Breast epithelium (tissue), 4 donors: ENCODE measurements at regions of chr13 and their contacts with region 1.

Region 1: GRCh38 chr13:23684647-23685046 is 114.4 kb downstream of the TNFRSF19 start:
- DNase-seq: no peak
- H3K4me3 ChIP-seq: no peak overlapping the region
- H3K27ac ChIP-seq: no peak overlapping the region
- H3K4me1 ChIP-seq: no peaks in the 10 kb centered on the region
- H3K27me3 ChIP-seq: no peaks in the 10 kb centered on the region
- CTCF ChIP-seq: no peak
- POLR2A ChIP-seq: no peak

Region 2: GRCh38 chr13:22271903-22272302 is 1412.7 kb before region 1 on chr13:
- intact Hi-C with region 1: no loop called
- DNase-seq: no peak
- H3K4me3 ChIP-seq: no peak overlapping the region
- H3K27ac ChIP-seq: no peak overlapping the region
- H3K4me1 ChIP-seq: no peaks in the 10 kb centered on the region
- H3K27me3 ChIP-seq: no peaks in the 10 kb centered on the region
- CTCF ChIP-seq: no peak
- POLR2A ChIP-seq: no peak

Region 3: DNA sequence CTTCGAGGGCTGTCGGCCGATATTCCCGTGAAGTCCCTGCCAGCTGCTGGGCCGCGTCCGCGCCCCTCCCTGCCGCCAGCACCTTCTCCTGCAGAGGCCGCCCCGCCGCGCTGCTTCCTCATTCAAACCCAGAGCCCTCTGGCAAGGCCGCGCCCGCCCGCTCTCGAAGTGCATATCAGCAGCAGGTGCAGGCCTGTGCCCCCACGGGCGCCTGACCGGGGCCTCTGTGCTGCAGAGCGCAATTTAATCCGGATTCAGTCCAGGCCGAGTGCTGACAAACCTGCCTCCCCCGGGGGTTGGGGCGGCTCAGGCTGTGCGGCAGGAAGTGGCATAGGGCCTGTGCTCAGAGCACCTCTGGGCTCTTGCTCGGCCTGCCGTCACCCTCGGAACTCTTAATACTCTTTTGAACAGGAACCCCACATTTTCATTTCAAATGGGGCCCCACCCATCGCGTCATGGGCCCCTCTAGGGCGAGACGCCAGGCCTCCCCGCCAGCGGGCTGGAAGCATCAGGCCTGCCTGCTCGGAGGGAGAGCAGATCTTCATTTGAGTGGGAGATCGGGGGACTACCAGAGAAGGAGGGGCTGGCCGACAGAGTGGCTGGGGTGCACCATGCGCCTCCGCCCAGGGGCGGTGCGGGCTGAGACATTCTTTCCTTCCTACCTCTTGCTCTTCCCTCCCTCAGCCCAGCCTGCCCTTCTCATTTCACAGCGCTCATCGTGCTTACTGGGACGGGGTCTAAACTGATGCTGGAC is 11.2 kb after region 1 on chr13:
- intact Hi-C with region 1: loop called (anchors 1 kb)
- DNase-seq: no peak
- H3K4me3 ChIP-seq: peak overlapping the region in 2 of 3 donors; percentile 3 to 52
- H3K27ac ChIP-seq: no peak overlapping the region
- H3K4me1 ChIP-seq: no peaks in the 10 kb centered on the region
- H3K27me3 ChIP-seq: no peaks in the 10 kb centered on the region
- CTCF ChIP-seq: no peak
- POLR2A ChIP-seq: no peak

Region 4: DNA sequence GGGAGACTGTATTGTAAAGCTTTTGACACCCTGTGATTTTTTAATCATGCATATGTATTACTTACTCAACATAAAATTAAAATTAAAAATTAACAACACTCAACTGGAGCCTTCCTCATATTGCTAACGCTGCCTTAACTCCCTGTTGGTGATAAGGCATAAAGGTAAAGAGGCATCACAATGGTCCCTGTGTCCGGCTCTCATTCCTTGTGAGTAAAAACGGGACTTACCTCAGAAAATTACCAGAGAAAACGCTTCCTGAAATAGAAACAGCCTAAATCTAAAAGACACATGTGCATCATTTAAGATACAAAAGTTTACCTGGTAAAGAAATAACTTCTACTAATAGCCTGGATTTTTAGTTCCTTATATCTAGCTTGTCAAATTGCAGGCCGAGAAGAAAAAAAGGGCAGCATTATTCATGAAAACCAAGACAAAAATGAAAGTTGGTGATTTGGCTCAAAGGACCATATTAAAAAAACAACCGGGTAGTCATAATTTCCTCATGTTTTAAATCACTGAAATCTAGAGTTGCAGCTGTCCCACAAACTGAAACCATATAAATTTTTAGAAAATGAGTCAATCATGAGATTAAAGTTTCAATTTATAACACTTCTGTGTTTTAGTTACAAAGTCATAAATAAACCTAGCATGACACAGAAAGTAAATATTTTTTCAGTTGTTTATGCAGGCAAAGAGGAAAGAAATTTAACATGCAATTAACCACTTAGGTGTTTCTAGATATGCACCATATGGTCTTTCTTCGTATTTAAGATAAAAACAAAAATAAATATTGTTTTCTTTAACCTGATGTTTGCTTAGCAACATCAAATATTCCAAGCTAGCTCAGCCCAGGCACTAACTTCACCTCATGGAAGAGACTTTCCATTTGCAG is 109.9 kb after region 1 on chr13:
- intact Hi-C with region 1: no loop called
- DNase-seq: no peak
- H3K4me3 ChIP-seq: no peak overlapping the region
- H3K27ac ChIP-seq: no peak overlapping the region
- H3K4me1 ChIP-seq: no peaks in the 10 kb centered on the region
- H3K27me3 ChIP-seq: no peaks in the 10 kb centered on the region
- CTCF ChIP-seq: no peak
- POLR2A ChIP-seq: no peak